Left ventricle myocardium superior (tissue), 1 donor: ENCODE measurements at regions of chr4 and their contacts with region 1.

Region 1: DNA sequence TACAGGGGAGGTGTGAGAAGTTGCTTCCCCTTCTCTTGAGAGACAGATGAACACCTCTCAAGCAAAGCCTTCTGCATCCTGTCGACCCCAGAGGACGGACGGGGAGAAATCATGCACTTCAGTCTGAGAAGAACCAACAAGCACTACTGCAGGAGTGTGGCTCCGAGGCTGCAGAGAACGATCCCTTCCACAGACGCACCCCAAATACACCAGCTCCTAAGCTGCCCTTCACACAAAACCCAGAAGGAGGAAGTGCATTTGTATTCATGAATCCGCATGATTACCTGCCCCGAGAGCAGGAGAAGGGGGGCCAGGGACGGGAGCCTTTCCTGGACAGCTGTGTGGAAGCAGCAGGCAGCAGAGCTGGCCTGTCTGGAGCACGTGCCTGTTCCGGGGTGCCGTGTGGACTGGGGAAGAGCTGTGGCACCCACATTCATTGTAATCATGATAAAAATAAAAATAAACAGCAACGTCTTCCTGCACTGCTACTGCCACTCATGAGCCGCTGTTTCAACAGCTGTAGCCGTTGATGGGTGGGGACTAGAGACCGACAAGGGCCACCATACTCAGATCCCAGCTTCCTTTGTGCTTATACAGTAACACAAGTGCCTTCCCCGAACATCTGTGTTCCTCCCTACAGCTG is 42.9 kb downstream of the ACSL1 start:
- DNase-seq: no peak
- ATAC-seq: peak; percentile 21

Region 2: DNA sequence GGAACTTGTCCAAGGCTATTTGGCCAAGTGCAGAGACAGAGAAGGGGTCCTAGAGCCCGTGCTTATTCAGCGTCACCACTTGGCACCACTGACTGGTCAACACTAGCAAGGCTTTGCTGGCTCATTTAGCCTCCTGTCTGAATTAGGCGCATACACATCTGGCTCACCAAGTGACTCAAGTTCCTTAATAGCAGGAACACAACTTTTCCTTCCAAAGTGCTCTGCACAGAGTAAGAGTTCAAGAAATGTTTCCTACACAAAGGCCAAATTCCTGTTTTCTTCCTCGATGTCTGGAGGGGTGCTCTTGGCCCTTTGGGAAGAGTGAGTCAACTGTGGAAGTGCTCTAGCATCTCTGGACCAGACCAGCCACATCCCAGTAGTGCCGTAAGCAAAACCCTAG is 22.2 kb before region 1 on chr4:
- intact Hi-C with region 1: loop called (anchors 2 kb)
- DNase-seq: no peak
- ATAC-seq: no peak